PC-3 (cell line): ENCODE measurements at regions of chr7 and their contacts with region 1.

Region 1: GRCh38 chr7:43872406-43873110 is 3.2 kb upstream of the MRPS24 start:
- DNase-seq: peak; percentile 91
- ATAC-seq: peak; percentile 59
- H3K4me3 ChIP-seq: peak overlapping the region; percentile 54
- H3K27ac ChIP-seq: peak overlapping the region; percentile 100
- H3K4me1 ChIP-seq: peaks cover 63% of the 10 kb centered on the region
- H3K27me3 ChIP-seq: no peaks in the 10 kb centered on the region
- CTCF ChIP-seq: no peak

Region 2: GRCh38 chr7:43905956-43906330 is 33.4 kb after region 1 on chr7:
- CTCF ChIA-PET with region 1: interaction called, 3 read pairs
- POLR2A ChIA-PET with region 1: interaction called, 4 read pairs
- intact Hi-C with region 1: loop called (anchors 2 kb)
- DNase-seq: peak; percentile 14
- ATAC-seq: peak; percentile 42
- H3K4me3 ChIP-seq: peak overlapping the region; percentile 76
- H3K27ac ChIP-seq: peak overlapping the region; percentile 50
- H3K4me1 ChIP-seq: peaks cover 26% of the 10 kb centered on the region
- H3K27me3 ChIP-seq: no peaks in the 10 kb centered on the region
- CTCF ChIP-seq: no peak

Region 3: DNA sequence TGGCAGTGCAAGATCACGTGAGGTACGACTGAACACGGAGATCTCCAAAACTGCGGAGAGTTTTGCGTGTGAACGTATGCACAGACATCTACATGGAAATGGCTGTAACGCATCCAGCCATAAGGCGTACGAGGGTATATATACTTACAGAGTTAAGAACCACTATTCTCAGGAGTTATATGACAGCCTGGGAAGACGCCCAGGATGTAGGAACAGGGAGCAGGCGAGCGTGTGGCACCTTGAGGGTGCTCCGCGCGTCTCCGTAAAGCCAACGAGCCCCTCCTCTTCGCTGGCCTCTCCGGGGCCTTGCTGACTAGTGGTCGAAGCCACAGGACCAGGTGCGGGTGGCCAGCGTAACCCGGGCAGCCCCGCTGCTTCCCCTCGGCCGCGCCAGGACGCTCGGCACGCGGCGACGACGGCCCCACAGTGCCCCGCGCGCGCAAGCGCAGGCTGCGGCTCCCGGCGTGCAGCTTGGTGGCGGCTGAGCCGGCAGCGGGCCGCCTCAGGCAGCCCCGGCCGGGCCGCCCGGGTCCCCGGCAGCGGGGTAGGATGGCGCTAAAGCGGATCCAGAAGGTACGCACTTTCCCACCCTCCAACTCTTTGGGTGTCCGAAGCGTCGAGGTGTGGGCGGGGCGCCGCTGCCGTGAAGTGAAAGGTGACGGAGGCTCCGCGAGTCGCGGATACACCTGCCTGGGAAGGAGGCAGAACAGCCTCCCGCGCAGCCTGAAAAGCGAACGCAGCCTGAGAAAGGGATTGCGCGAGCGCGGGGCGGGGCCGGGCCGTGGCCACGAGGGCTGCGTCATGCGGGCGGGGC is 53.6 kb after region 1 on chr7 and contains the start of gene UBE2D4:
- CTCF ChIA-PET with region 1: no interaction called
- POLR2A ChIA-PET with region 1: no interaction called
- intact Hi-C with region 1: loop called (anchors 1 kb)
- DNase-seq: peak; percentile 84
- ATAC-seq: peak; percentile 94
- H3K4me3 ChIP-seq: peak within 1 kb of the TSS; percentile 80
- H3K27ac ChIP-seq: peak within 1 kb of the TSS; percentile 67
- H3K4me1 ChIP-seq: peaks cover 15% of the 10 kb centered on the region
- H3K27me3 ChIP-seq: no peaks in the 10 kb centered on the region
- CTCF ChIP-seq: no peak
- total RNA-seq, gene UBE2D4: 11.8 and 17.7 TPM in 2 replicates

Region 4: DNA sequence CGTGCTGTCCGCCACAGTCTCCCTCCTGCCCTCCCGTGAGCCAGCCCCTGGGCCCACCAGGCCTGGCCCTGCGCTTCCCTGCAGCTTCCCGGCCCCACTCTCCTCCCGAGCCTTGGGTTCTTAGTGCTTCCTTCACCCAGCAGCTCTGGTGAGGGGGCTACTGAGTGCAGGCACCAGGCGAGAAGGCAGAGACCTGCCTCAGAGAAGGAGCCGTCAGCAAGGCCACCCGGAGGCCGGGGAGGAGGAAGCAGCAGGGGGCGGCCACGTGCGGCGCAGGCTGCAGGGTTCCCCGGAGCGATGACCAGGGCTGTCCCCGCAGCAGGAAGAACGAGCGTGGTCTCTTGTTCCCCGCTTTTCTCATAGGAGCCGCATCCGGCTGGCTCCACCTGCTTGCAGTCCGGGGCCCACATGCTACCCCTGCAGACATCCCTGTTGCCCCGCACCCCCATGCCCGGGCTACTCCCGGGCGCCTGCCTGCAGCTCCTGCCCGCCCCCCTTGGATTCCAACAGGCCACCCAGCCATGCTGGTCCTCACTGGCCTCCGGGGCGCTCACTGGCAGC is 348.8 kb after region 1 on chr7:
- CTCF ChIA-PET with region 1: no interaction called
- POLR2A ChIA-PET with region 1: no interaction called
- intact Hi-C with region 1: no loop called
- DNase-seq: no peak
- ATAC-seq: no peak
- H3K4me3 ChIP-seq: no peak overlapping the region
- H3K27ac ChIP-seq: no peak overlapping the region
- H3K4me1 ChIP-seq: no peaks in the 10 kb centered on the region
- H3K27me3 ChIP-seq: no peaks in the 10 kb centered on the region
- CTCF ChIP-seq: no peak